ENCODE measurements at regions of chr3 and their contacts with region 1.

Region 1: GRCh38 chr3:30112902-30113484 is 493.4 kb upstream of the TGFBR2 start:
- DNase-seq: peak in 7 of 9 donors; percentile 17 to 68 (median 55)
- ATAC-seq: peak; percentile 61
- H3K4me3 ChIP-seq: no peak overlapping the region
- H3K4me3 Mint-ChIP-seq: no peak overlapping the region
- H3K27ac ChIP-seq: no peak overlapping the region
- H3K27ac Mint-ChIP-seq: no peak overlapping the region
- H3K4me1 ChIP-seq: no peaks in the 10 kb centered on the region
- H3K4me1 Mint-ChIP-seq: peaks cover 4 to 8% (median 6%) of the 10 kb centered on the region in 7 donors
- H3K27me3 ChIP-seq: no peaks in the 10 kb centered on the region
- H3K27me3 Mint-ChIP-seq: peaks cover 0 to 16% (median 9%) of the 10 kb centered on the region in 5 donors

Region 2: GRCh38 chr3:28916713-28917499 is 1196.1 kb before region 1 on chr3:
- CTCF ChIA-PET with region 1: no interaction called
- POLR2A ChIA-PET with region 1: no interaction called
- intact Hi-C with region 1: loop called in 1 of 2 experiments (anchors 5 kb)
- DNase-seq: peak in 4 of 9 donors; percentile 0 to 23 (median 7)
- ATAC-seq: no peak
- H3K4me3 ChIP-seq: no peak overlapping the region
- H3K4me3 Mint-ChIP-seq: peak overlapping the region in 2 of 10 donors; percentile 26 to 43
- H3K27ac ChIP-seq: no peak overlapping the region
- H3K27ac Mint-ChIP-seq: no peak overlapping the region
- H3K4me1 ChIP-seq: no peaks in the 10 kb centered on the region
- H3K4me1 Mint-ChIP-seq: peaks cover 0 to 18% (median 4%) of the 10 kb centered on the region in 7 donors
- H3K27me3 ChIP-seq: no peaks in the 10 kb centered on the region
- H3K27me3 Mint-ChIP-seq: peaks cover 0 to 14% (median 0%) of the 10 kb centered on the region in 5 donors

Region 3: DNA sequence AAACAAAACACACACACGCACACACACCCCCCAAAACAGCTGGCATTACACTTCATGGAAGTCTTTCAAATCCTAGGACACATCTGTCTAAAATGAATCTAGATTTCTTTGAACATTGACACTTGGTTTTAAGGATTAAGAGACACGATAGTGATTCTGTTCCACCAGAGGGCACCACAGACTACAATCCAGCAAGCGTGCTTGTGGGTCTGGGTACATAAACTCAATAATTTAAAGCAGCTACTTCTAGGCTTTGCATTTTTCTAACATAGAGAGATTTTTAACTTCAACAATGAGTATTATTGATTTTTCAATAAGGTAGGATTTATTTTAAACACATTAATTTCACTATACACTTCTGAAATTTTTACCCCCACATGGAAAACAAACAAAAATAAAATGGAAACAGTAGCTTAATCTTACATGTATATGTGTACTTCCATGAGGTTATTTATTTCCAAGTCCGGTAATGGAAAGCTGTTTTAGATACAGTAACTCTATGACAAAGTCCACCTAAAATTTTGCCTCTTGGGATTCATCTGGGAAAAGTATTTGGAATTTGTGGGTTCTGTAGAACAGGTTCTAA is 70.6 kb before region 1 on chr3:
- CTCF ChIA-PET with region 1: interaction called, 4 read pairs
- POLR2A ChIA-PET with region 1: no interaction called
- intact Hi-C with region 1: loop called in 1 of 2 experiments (anchors 1 kb)
- DNase-seq: peak in 8 of 9 donors; percentile 25 to 73 (median 63)
- ATAC-seq: peak; percentile 68
- H3K4me3 ChIP-seq: no peak overlapping the region
- H3K4me3 Mint-ChIP-seq: no peak overlapping the region
- H3K27ac ChIP-seq: no peak overlapping the region
- H3K27ac Mint-ChIP-seq: no peak overlapping the region
- H3K4me1 ChIP-seq: no peaks in the 10 kb centered on the region
- H3K4me1 Mint-ChIP-seq: peaks cover 0 to 7% (median 4%) of the 10 kb centered on the region in 7 donors
- H3K27me3 ChIP-seq: no peaks in the 10 kb centered on the region
- H3K27me3 Mint-ChIP-seq: peaks cover 17 to 34% (median 28%) of the 10 kb centered on the region in 5 donors

Region 4: GRCh38 chr3:30162579-30162978 is 49.6 kb after region 1 on chr3:
- CTCF ChIA-PET with region 1: no interaction called
- POLR2A ChIA-PET with region 1: no interaction called
- intact Hi-C with region 1: no loop called
- DNase-seq: no peak
- ATAC-seq: no peak
- H3K4me3 ChIP-seq: no peak overlapping the region
- H3K4me3 Mint-ChIP-seq: no peak overlapping the region
- H3K27ac ChIP-seq: no peak overlapping the region
- H3K27ac Mint-ChIP-seq: no peak overlapping the region
- H3K4me1 ChIP-seq: no peaks in the 10 kb centered on the region
- H3K4me1 Mint-ChIP-seq: no peaks in the 10 kb centered on the region
- H3K27me3 ChIP-seq: no peaks in the 10 kb centered on the region
- H3K27me3 Mint-ChIP-seq: peaks cover 0 to 2% (median 0%) of the 10 kb centered on the region in 5 donors

Region 5: GRCh38 chr3:30319713-30320112 is 206.7 kb after region 1 on chr3:
- CTCF ChIA-PET with region 1: no interaction called
- POLR2A ChIA-PET with region 1: no interaction called
- intact Hi-C with region 1: loop called in 1 of 2 experiments (anchors 2 kb)
- DNase-seq: peak in 7 of 9 donors; percentile 32 to 72 (median 63)
- ATAC-seq: peak; percentile 90
- H3K4me3 ChIP-seq: no peak overlapping the region
- H3K4me3 Mint-ChIP-seq: peak overlapping the region in 4 of 10 donors; percentile 0 to 7 (median 4)
- H3K27ac ChIP-seq: no peak overlapping the region
- H3K27ac Mint-ChIP-seq: peak overlapping the region in 6 of 9 donors; percentile 1 to 60 (median 43)
- H3K4me1 ChIP-seq: peaks cover 0 to 15% of the 10 kb centered on the region in 2 donors
- H3K4me1 Mint-ChIP-seq: peaks cover 3 to 36% (median 20%) of the 10 kb centered on the region in 7 donors
- H3K27me3 ChIP-seq: no peaks in the 10 kb centered on the region
- H3K27me3 Mint-ChIP-seq: no peaks in the 10 kb centered on the region

Region 6: GRCh38 chr3:30751610-30752299 is 638.8 kb after region 1 on chr3:
- CTCF ChIA-PET with region 1: interaction called, 5 read pairs
- POLR2A ChIA-PET with region 1: no interaction called
- intact Hi-C with region 1: loop called (anchors 1 kb)
- DNase-seq: peak; percentile 8 to 71 (median 54)
- ATAC-seq: peak; percentile 65
- H3K4me3 ChIP-seq: no peak overlapping the region
- H3K4me3 Mint-ChIP-seq: peak overlapping the region in 3 of 10 donors; percentile 16 to 48 (median 45)
- H3K27ac ChIP-seq: no peak overlapping the region
- H3K27ac Mint-ChIP-seq: peak overlapping the region in 1 of 9 donors; percentile 28
- H3K4me1 ChIP-seq: peaks cover 0 to 3% of the 10 kb centered on the region in 2 donors
- H3K4me1 Mint-ChIP-seq: peaks cover 0 to 33% (median 12%) of the 10 kb centered on the region in 7 donors
- H3K27me3 ChIP-seq: no peaks in the 10 kb centered on the region
- H3K27me3 Mint-ChIP-seq: peaks cover 0 to 9% (median 0%) of the 10 kb centered on the region in 5 donors

Region 7: DNA sequence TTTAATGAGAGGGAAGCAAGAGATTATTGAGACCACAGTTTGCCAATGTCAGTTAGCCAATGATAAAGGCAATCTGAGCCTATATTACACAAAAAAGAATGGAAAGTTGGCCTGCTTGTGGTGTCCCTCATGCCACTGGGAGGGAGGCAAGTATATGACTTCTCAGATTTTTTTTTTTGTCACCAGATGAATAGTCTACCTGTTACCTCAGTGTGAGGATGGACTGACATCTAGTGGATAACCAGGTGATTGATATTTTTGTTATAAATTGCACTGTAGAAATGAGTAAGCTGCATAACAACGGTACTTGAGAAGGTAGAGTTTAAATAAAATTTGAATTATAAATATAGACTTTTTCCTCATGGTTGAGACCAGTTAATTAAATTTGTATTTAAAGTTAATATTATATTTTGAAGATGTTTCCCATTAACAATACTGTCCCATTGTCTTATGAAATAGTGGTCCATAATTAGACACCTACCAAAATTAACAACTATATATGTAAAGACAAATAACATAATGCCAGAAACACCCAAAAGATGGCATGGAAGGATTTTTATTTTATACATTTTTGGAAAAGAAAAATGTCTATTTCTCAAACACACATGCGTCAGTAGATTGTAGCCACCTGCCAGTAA is 1019.3 kb after region 1 on chr3:
- CTCF ChIA-PET with region 1: no interaction called
- POLR2A ChIA-PET with region 1: no interaction called
- intact Hi-C with region 1: loop called in 1 of 2 experiments (anchors 2 kb)
- DNase-seq: peak in 6 of 9 donors; percentile 2 to 55 (median 39)
- ATAC-seq: peak; percentile 58
- H3K4me3 ChIP-seq: no peak overlapping the region
- H3K4me3 Mint-ChIP-seq: no peak overlapping the region
- H3K27ac ChIP-seq: no peak overlapping the region
- H3K27ac Mint-ChIP-seq: no peak overlapping the region
- H3K4me1 ChIP-seq: no peaks in the 10 kb centered on the region
- H3K4me1 Mint-ChIP-seq: peaks cover 0 to 18% (median 0%) of the 10 kb centered on the region in 7 donors
- H3K27me3 ChIP-seq: no peaks in the 10 kb centered on the region
- H3K27me3 Mint-ChIP-seq: no peaks in the 10 kb centered on the region

Measured in naive thymus-derived CD4-positive, alpha-beta T cell (primary cell).